B cell (primary cell): ENCODE measurements at regions of chr4 and their contacts with region 1.

Region 1: GRCh38 chr4:145956288-145956890 is 17.8 kb upstream of the ZNF827 start:
- DNase-seq: peak; percentile 78
- ATAC-seq: peak; percentile 61
- H3K4me3 ChIP-seq: no peak overlapping the region
- H3K4me3 Mint-ChIP-seq: no peak overlapping the region
- H3K27ac ChIP-seq: no peak overlapping the region
- H3K27ac Mint-ChIP-seq: no peak overlapping the region
- H3K4me1 ChIP-seq: peaks cover 5 to 6% of the 10 kb centered on the region in 2 donors
- H3K4me1 Mint-ChIP-seq: peaks cover 6% of the 10 kb centered on the region
- H3K27me3 ChIP-seq: no peaks in the 10 kb centered on the region
- H3K27me3 Mint-ChIP-seq: no peaks in the 10 kb centered on the region
- CTCF ChIP-seq: peak; percentile 86

Region 2: DNA sequence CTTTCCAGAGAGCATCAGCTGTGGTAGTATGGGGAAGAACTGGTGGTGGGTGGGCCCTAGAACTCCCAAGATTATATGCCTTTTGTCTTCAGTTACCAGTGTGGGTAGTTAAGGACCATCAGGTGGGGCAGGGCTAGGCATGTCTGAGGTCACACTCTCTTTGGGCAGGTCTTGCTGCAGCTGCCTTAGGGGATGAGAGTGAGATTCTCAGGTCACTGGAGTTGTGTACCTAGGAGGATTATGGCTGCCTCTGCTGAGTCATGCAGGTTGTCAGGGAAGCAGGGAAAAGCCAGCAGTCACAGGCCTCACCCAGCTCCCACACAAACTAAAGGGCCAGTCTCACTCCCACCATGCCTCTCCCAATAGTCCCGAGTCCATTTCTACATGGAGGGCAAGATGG is 1643.0 kb before region 1 on chr4:
- CTCF ChIA-PET with region 1: no interaction called
- POLR2A ChIA-PET with region 1: no interaction called
- intact Hi-C with region 1: no loop called
- DNase-seq: no peak
- ATAC-seq: no peak
- H3K4me3 ChIP-seq: no peak overlapping the region
- H3K4me3 Mint-ChIP-seq: no peak overlapping the region
- H3K27ac ChIP-seq: no peak overlapping the region
- H3K27ac Mint-ChIP-seq: no peak overlapping the region
- H3K4me1 ChIP-seq: no peaks in the 10 kb centered on the region
- H3K4me1 Mint-ChIP-seq: no peaks in the 10 kb centered on the region
- H3K27me3 ChIP-seq: no peaks in the 10 kb centered on the region
- H3K27me3 Mint-ChIP-seq: no peaks in the 10 kb centered on the region
- CTCF ChIP-seq: no peak

Region 3: DNA sequence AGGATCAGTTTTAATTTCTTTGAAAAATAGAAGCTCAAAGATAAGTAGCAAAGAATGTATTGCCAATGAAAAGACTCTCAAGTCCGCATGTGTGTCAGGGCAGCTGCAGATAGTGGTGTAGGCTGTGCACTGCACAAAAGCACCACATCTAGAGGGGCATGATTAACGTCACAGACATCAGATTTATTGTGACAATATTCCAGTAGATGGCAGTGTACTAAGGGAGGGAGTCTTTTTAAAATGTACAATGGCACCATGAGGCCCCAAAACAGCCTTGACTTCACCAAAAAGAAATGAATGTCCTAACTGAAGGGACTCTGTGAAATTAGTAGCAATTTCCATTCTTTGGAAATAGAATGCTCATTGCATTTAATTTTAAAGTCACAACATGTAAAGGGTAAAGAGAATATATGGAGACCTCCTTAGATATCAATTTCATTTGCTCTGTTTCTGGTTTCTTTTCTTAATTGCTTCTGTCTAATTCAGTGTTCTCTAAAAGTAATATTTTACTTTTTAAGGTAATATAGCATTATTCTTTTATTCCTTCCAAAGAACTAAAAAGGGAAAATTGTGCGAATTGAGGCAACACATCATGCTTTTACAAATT is 116.1 kb before region 1 on chr4:
- CTCF ChIA-PET with region 1: no interaction called
- POLR2A ChIA-PET with region 1: no interaction called
- intact Hi-C with region 1: loop called (anchors 5 kb)
- DNase-seq: peak; percentile 42
- ATAC-seq: peak; percentile 53
- H3K4me3 ChIP-seq: no peak overlapping the region
- H3K4me3 Mint-ChIP-seq: no peak overlapping the region
- H3K27ac ChIP-seq: no peak overlapping the region
- H3K27ac Mint-ChIP-seq: no peak overlapping the region
- H3K4me1 ChIP-seq: peaks cover 7 to 10% of the 10 kb centered on the region in 2 donors
- H3K4me1 Mint-ChIP-seq: peaks cover 19% of the 10 kb centered on the region
- H3K27me3 ChIP-seq: no peaks in the 10 kb centered on the region
- H3K27me3 Mint-ChIP-seq: no peaks in the 10 kb centered on the region
- CTCF ChIP-seq: peak; percentile 53

Region 4: GRCh38 chr4:146243141-146243882 is 286.9 kb after region 1 on chr4:
- CTCF ChIA-PET with region 1: no interaction called
- POLR2A ChIA-PET with region 1: no interaction called
- intact Hi-C with region 1: loop called (anchors 1 kb)
- DNase-seq: peak; percentile 44
- ATAC-seq: peak; percentile 65
- H3K4me3 ChIP-seq: no peak overlapping the region
- H3K4me3 Mint-ChIP-seq: peak overlapping the region; percentile 20
- H3K27ac ChIP-seq: no peak overlapping the region
- H3K27ac Mint-ChIP-seq: no peak overlapping the region
- H3K4me1 ChIP-seq: peaks cover 9 to 12% of the 10 kb centered on the region in 2 donors
- H3K4me1 Mint-ChIP-seq: peaks cover 18% of the 10 kb centered on the region
- H3K27me3 ChIP-seq: peaks cover 0 to 3% (median 0%) of the 10 kb centered on the region in 4 experiments
- H3K27me3 Mint-ChIP-seq: peaks cover 2% of the 10 kb centered on the region
- CTCF ChIP-seq: peak; percentile 55